Posterior vena cava (tissue), 2 donors: ENCODE measurements at regions of chr3 and their contacts with region 1.

Region 1: DNA sequence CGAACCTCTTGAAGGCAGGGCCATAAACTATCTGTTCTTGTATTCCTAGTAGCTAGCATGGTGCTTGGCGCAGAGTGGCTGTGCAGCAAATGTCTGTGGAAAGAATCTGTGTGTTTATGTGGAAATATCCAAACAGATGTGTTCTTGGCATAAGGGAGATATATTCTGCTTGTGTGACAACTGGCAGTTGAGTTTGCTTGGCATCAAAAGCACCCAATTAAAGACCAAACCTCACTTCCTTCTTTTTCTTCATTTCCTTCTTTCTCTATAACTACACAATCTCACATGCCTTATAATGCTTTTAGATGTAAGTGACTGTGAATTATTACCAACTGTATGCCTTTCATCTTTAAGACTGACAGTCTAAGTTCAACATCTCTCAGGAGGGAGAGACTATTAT is 296.5 kb downstream of the SLC9A9 start:
- DNase-seq: no peak

Region 2: GRCh38 chr3:143581972-143582722 is 30.4 kb after region 1 on chr3:
- intact Hi-C with region 1: loop called in 1 of 2 experiments (anchors 1 kb)
- DNase-seq: no peak